PC-3 (cell line): ENCODE measurements at regions of chr17 and their contacts with region 1.

Region 1: GRCh38 chr17:43846221-43846712 is 709 bp upstream of the CD300LG start:
- DNase-seq: peak; percentile 90
- ATAC-seq: peak; percentile 90
- H3K4me3 ChIP-seq: no peak overlapping the region
- H3K27ac ChIP-seq: no peak overlapping the region
- H3K4me1 ChIP-seq: peaks cover 15% of the 10 kb centered on the region
- H3K27me3 ChIP-seq: peaks cover 7% of the 10 kb centered on the region
- CTCF ChIP-seq: peak; percentile 97

Region 2: GRCh38 chr17:43694077-43694870 is 152.0 kb before region 1 on chr17:
- CTCF ChIA-PET with region 1: interaction called, 4 read pairs
- POLR2A ChIA-PET with region 1: no interaction called
- intact Hi-C with region 1: loop called (anchors 1 kb)
- DNase-seq: peak; percentile 97
- ATAC-seq: peak; percentile 94
- H3K4me3 ChIP-seq: peak overlapping the region; percentile 24; the same call in 1 of the 2 replicates
- H3K27ac ChIP-seq: no peak overlapping the region
- H3K4me1 ChIP-seq: no peaks in the 10 kb centered on the region
- H3K27me3 ChIP-seq: no peaks in the 10 kb centered on the region
- CTCF ChIP-seq: peak; percentile 99

Region 3: GRCh38 chr17:43766413-43767052 is 79.7 kb before region 1 on chr17:
- CTCF ChIA-PET with region 1: interaction called, 5 read pairs
- POLR2A ChIA-PET with region 1: no interaction called
- intact Hi-C with region 1: loop called (anchors 1 kb)
- DNase-seq: peak; percentile 78
- ATAC-seq: peak; percentile 63
- H3K4me3 ChIP-seq: no peak overlapping the region
- H3K27ac ChIP-seq: no peak overlapping the region
- H3K4me1 ChIP-seq: no peaks in the 10 kb centered on the region
- H3K27me3 ChIP-seq: no peaks in the 10 kb centered on the region
- CTCF ChIP-seq: peak; percentile 98

Region 4: DNA sequence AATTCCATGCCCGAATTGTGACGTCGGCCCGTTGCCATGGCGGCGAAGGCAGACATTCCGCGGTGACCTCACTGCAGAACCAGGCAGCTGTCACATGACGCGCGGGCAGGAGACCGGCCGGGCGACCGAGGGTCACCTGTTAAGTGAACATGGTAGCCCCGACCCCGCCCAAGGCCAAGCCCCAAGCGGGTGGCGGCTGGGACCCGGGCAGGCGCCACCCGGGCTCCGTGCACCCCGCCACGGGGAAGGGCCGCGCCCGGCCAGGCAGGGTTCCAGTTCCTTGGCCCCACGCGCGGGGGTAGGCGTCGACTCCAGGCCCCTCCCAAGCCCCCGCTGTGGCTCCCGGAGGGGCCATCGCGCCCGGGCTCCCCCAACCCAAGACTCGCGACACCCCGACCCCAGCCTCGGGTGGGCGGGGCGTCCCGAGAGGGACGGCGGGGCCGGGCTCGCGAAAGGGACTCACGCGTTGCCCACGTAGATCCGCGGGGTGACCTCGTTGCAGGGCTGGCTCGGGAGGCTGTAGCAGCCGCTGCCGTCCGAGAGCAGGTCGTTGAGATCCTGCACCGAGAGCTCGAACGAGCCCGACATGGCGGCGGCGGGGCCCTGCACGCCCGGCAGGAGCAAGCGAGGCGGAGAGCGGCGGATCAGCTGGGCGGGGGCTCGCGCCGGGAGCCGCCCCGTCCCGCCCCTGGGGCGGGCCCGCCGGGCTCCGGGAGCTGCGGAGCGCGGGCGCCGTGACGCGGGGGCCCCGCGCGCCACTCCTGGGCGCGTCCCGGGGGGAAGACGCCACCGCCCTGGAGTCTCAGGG is 67.7 kb before region 1 on chr17 and contains the start of gene DUSP3:
- CTCF ChIA-PET with region 1: interaction called, 7 read pairs
- POLR2A ChIA-PET with region 1: interaction called, 20 read pairs
- intact Hi-C with region 1: loop called (anchors 2 kb)
- DNase-seq: peak; percentile 89
- ATAC-seq: peak; percentile 95
- H3K4me3 ChIP-seq: peak within 1 kb of the TSS; percentile 94
- H3K27ac ChIP-seq: peak within 1 kb of the TSS; percentile 74
- H3K4me1 ChIP-seq: peaks cover 19% of the 10 kb centered on the region
- H3K27me3 ChIP-seq: no peaks in the 10 kb centered on the region
- CTCF ChIP-seq: no peak
- total RNA-seq, gene DUSP3: 48.6 and 50.7 TPM in 2 replicates

Region 5: GRCh38 chr17:43791589-43791988 is 54.7 kb before region 1 on chr17:
- CTCF ChIA-PET with region 1: interaction called, 31 read pairs
- POLR2A ChIA-PET with region 1: no interaction called
- intact Hi-C with region 1: loop called (anchors 1 kb)
- DNase-seq: peak; percentile 84
- ATAC-seq: peak; percentile 74
- H3K4me3 ChIP-seq: no peak overlapping the region
- H3K27ac ChIP-seq: no peak overlapping the region
- H3K4me1 ChIP-seq: peaks cover 4% of the 10 kb centered on the region; the same call in 1 of the 2 replicates
- H3K27me3 ChIP-seq: no peaks in the 10 kb centered on the region
- CTCF ChIP-seq: no peak

Region 6: GRCh38 chr17:43803758-43804157 is 42.5 kb before region 1 on chr17:
- CTCF ChIA-PET with region 1: no interaction called
- POLR2A ChIA-PET with region 1: no interaction called
- intact Hi-C with region 1: no loop called
- DNase-seq: no peak
- ATAC-seq: no peak
- H3K4me3 ChIP-seq: no peak overlapping the region
- H3K27ac ChIP-seq: no peak overlapping the region
- H3K4me1 ChIP-seq: no peaks in the 10 kb centered on the region
- H3K27me3 ChIP-seq: no peaks in the 10 kb centered on the region
- CTCF ChIP-seq: no peak

Region 7: GRCh38 chr17:43860077-43860725 is 13.9 kb after region 1 on chr17:
- CTCF ChIA-PET with region 1: no interaction called
- POLR2A ChIA-PET with region 1: no interaction called
- intact Hi-C with region 1: no loop called
- DNase-seq: no peak
- ATAC-seq: no peak; the same call in 1 of the 2 replicates
- H3K4me3 ChIP-seq: no peak overlapping the region
- H3K27ac ChIP-seq: no peak overlapping the region
- H3K4me1 ChIP-seq: no peaks in the 10 kb centered on the region
- H3K27me3 ChIP-seq: peaks cover 59% of the 10 kb centered on the region
- CTCF ChIP-seq: no peak

Region 8: DNA sequence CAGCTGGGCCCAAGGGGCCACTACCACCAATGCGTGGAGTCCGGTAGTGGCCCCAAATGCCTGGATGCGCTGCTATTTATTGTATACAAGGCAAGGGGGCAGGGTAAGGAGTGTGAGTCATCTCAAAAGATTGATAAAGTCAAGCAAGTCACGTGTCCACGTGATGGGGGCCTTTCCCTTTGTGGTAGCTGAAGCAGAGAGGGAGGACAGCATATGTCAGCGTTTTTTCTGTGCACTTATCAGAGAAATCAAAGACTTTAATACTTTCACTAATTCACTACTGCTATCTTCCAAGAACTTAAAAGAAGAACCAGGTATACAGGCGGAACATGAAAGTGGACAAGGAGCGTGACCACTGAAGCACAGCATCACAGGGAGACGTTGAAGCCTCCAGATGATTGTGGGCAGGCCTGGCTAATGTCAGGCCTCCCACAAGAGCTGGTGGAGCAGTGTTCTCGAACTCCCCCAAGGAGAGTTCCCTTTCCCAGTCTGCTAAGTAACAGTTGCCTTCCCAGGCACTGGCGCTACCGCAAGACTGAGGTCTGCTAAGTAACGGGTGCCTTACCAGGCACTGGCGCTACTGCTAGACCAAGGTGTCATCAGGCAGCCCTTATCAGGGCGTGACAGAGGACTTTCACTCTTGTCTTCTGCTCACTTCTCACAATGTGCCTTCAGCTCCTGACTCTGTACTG is 313.4 kb after region 1 on chr17:
- CTCF ChIA-PET with region 1: no interaction called
- POLR2A ChIA-PET with region 1: no interaction called
- intact Hi-C with region 1: no loop called
- DNase-seq: no peak
- ATAC-seq: no peak
- H3K4me3 ChIP-seq: no peak overlapping the region
- H3K27ac ChIP-seq: no peak overlapping the region
- H3K4me1 ChIP-seq: no peaks in the 10 kb centered on the region
- H3K27me3 ChIP-seq: no peaks in the 10 kb centered on the region
- CTCF ChIP-seq: no peak